ENCODE measurements at regions of chr11 and their contacts with region 1.

Region 1: DNA sequence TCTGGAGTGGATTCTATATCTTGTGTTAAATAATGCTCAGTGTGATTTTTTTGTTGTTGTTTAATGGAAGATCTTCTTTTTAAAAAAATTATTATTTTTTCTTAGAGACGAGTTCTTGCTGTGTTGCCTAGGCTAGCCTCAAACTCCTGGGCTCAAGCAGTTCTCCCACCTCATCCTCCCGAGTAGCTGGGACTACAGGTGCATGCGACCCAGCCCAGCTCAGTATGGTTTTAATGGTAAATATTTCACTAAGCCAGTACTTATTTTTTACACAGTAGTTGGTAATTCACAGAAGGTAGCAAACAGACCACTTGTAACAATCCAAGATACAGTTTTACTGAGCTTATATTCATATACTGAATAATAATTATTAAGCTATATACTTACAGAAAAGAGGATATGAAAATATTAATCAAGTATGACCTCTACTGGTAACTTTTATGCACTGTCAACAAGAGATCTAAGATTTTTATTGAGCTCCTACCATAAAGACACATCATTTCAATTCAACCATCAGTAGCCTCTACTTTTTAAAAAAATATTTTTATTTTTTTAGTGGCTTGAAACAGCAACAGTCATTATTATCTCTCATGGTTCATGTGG is 6.1 kb upstream of the CD59 start:
- DNase-seq: no peak
- H3K4me3 ChIP-seq: no peak overlapping the region
- H3K27ac ChIP-seq: no peak overlapping the region
- H3K4me1 ChIP-seq: peaks cover 6% of the 10 kb centered on the region
- H3K27me3 ChIP-seq: no peaks in the 10 kb centered on the region
- CTCF ChIP-seq: peak; percentile 41 to 50

Region 2: GRCh38 chr11:33362051-33362910 is 380.1 kb before region 1 on chr11:
- CTCF ChIA-PET with region 1: interaction called, 3 read pairs
- dilution Hi-C with region 1: no loop called
- in situ Hi-C with region 1: loop called in 1 of 2 experiments (anchors 10 kb)
- intact Hi-C with region 1: loop called (anchors 1 kb)
- DNase-seq: peak; percentile 42
- H3K4me3 ChIP-seq: no peak overlapping the region
- H3K27ac ChIP-seq: no peak overlapping the region
- H3K4me1 ChIP-seq: no peaks in the 10 kb centered on the region
- H3K27me3 ChIP-seq: no peaks in the 10 kb centered on the region
- CTCF ChIP-seq: peak; percentile 46 to 49

Region 3: DNA sequence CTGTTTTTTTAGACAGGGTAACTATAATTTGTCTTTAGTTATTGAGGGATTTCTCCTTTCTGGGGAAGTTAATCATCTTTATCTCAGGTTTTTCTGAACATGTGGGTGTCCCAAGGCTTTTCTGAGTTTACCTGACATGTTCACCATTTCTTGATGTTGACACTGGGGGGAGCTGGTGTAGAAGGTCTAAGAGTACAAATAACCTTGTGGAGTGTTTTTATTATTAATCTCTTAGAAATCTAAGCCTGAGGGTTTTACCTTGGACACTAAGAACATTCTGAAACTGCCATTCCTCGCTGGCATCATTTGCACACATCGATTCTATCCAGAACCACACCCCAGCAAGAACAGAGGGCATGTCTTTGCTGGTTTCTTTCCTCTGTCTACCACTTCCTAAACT is 26.1 kb before region 1 on chr11:
- CTCF ChIA-PET with region 1: interaction called, 39 read pairs
- dilution Hi-C with region 1: no loop called
- in situ Hi-C with region 1: no loop called
- intact Hi-C with region 1: loop called (anchors 1 kb)
- DNase-seq: peak; percentile 80
- H3K4me3 ChIP-seq: no peak overlapping the region
- H3K27ac ChIP-seq: peak overlapping the region; percentile 93
- H3K4me1 ChIP-seq: peaks cover 59% of the 10 kb centered on the region
- H3K27me3 ChIP-seq: no peaks in the 10 kb centered on the region
- CTCF ChIP-seq: peak; percentile 44 to 58

Region 4: GRCh38 chr11:33773987-33774735 is 31.8 kb after region 1 on chr11 and contains the start of gene FBXO3:
- CTCF ChIA-PET with region 1: interaction called, 32 read pairs
- dilution Hi-C with region 1: no loop called
- in situ Hi-C with region 1: no loop called
- intact Hi-C with region 1: no loop called
- DNase-seq: peak; percentile 78
- H3K4me3 ChIP-seq: peak within 1 kb of the TSS; percentile 86 to 93 (median 88)
- H3K27ac ChIP-seq: peak within 1 kb of the TSS; percentile 76
- H3K4me1 ChIP-seq: peaks cover 39% of the 10 kb centered on the region
- H3K27me3 ChIP-seq: no peaks in the 10 kb centered on the region
- CTCF ChIP-seq: no peak
- total RNA-seq, gene FBXO3: 27.6 to 44.8 TPM

Region 5: DNA sequence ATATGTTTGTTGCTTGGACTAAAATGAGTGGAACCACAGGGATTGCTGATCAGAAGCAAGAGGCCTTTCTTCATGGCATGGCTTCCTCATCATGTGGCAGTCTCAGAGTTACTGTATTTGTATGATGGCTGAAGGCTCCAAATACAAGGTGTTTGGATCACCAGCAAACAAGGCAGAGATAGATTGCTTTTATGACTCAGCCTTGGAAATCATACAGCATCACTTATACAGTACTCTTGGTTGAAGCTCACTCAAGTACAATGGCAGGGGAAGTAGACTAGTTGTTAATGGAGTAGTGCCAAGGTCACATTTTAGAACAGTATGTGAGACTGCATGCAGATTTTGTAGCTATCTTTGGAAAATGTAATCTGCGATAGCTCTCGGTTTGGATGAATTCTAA is 325.8 kb after region 1 on chr11:
- CTCF ChIA-PET with region 1: no interaction called
- dilution Hi-C with region 1: no loop called
- in situ Hi-C with region 1: no loop called
- intact Hi-C with region 1: no loop called
- DNase-seq: peak; percentile 29
- H3K4me3 ChIP-seq: no peak overlapping the region
- H3K27ac ChIP-seq: no peak overlapping the region
- H3K4me1 ChIP-seq: no peaks in the 10 kb centered on the region
- H3K27me3 ChIP-seq: no peaks in the 10 kb centered on the region
- CTCF ChIP-seq: no peak